ENCODE measurements at regions of chr6 and their contacts with region 1.

Region 1: DNA sequence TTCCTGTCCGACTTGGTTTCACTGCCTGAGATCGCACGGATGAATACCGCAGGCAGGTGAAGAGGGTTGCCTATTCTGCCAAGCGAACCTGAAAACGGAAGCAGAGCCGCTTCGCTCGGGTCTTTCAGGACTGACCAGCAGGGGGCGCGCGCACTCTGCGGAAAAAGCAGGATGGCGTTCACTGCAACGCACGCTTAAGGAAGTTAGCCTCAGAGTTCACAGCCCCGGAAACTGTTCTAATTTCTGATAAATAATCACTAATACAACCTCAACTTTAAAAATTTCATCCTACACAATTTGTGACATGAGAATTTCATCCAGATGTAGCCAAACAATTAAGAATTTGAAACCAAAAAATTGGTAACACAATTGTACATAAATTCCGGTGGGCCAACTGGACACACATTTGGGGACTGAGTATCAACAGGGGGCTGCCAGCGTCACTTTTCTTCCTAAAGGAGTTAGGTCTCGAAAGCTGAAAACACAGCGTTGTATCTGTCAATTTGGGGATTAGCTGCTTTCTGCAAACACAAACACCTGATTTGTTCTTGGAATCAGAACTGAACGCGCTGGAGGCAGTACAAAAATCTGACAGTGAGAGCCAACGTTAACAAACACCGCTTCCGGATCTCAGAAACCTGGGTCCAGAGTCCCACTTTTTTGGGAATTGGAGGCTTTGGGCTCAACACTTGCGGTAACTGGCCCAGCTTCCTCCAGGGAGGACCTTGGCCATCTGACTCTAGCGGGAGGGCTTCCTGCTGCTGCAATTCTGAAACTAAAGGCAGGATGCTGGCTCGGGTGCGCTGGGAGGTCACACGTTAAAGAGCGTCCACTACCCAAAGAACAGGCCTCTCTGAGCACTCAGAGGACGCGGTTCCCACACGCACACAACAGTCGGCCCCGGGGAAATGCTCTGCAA is 8.8 kb downstream of the PXDC1 start:
- DNase-seq: peak; percentile 90
- ATAC-seq: peak; percentile 92
- H3K4me3 Mint-ChIP-seq: no peak overlapping the region
- H3K27ac Mint-ChIP-seq: peak overlapping the region; percentile 20
- H3K4me1 Mint-ChIP-seq: peaks cover 7% of the 10 kb centered on the region
- H3K27me3 Mint-ChIP-seq: peaks cover 10% of the 10 kb centered on the region
- CTCF ChIP-seq: peak; percentile 94

Region 2: DNA sequence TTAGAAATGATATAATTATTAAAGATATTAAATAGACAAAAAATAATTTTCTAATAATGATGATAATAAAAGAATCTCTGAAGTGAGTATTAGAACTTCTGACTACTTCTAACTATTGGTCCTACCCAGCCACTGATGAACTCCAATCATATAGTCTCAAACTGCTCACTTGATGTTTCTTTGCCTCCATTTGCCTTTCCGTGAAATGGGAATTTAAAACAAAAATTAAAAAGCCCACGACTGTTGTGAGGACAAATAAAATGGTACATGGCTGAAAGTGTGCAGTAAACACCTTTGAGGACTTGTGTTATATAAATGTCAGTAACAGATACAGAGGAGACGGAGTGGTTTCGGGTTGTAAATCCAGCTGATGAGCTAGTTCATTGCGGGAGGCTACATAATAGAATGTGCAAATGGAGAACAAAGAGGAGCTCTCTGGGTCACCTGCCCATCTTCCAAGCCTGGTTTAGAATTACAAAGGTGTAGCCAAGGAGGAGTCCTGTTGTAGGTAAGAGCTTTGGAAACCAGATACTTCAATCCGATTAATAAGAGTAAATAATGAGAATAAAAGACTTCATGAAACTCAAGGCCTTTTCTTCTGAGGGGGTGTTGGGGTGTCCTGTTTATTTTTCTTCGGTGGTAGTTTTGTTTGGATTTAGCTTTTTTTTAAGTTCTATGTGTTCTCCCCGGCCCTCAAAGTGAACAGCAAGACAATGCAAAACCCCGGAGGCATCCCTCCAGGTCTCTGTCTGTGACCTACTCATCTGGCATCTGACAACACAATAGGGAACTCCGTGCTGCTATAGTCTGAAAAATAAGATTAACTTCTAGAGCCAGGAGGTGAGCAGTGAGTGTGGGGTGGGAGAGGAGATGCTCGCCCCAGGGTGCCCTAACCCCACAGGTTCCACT is 13.2 kb after region 1 on chr6:
- CTCF ChIA-PET with region 1: interaction called, 16 read pairs
- POLR2A ChIA-PET with region 1: interaction called, 4 read pairs
- intact Hi-C with region 1: no loop called
- DNase-seq: no peak
- ATAC-seq: no peak
- H3K4me3 Mint-ChIP-seq: no peak overlapping the region
- H3K27ac Mint-ChIP-seq: no peak overlapping the region
- H3K4me1 Mint-ChIP-seq: no peaks in the 10 kb centered on the region
- H3K27me3 Mint-ChIP-seq: peaks cover 18% of the 10 kb centered on the region
- CTCF ChIP-seq: no peak

Region 3: DNA sequence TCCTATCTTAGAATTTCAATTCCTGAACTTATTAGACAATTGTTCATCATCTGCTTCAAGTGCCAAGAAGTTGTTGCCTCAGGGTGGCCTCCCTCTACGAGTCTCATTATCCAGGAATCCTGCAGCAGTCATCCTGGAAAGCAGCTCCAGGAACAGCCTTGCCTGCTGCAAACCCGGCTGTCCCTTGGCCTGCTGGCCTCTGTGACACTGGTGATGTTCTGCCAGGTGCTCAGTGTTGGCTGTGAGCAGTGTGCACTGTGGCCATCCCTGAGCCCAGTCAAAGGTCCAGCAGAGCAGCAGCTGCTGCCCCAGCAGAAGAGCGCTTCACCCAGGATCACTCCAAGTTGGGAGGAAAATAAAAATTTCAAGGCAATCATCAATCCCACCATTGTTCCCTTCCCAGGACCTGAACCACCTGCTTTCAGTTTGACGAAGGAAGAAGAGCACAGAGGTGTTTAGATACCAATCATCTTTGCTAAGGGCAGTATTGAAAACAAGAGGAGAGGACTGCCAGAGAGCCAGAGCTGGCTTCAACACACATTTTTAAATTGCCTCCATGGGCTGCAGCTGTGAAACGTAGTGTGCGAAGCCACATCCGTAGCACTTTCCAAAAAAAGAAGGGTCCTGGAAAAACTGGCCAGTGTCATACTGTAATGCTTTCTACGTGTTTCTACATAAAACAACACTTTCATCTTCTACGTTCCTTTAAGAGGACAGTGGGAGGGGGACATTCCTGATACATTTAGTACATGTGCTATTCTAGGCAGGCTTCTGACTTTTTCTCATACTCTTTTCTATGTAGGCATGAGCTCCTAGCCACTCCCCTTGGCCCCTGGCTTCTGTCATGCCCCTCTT is 99.3 kb after region 1 on chr6:
- CTCF ChIA-PET with region 1: no interaction called
- POLR2A ChIA-PET with region 1: no interaction called
- intact Hi-C with region 1: no loop called
- DNase-seq: no peak
- ATAC-seq: no peak
- H3K4me3 Mint-ChIP-seq: no peak overlapping the region
- H3K27ac Mint-ChIP-seq: no peak overlapping the region
- H3K4me1 Mint-ChIP-seq: no peaks in the 10 kb centered on the region
- H3K27me3 Mint-ChIP-seq: no peaks in the 10 kb centered on the region
- CTCF ChIP-seq: no peak

Region 4: DNA sequence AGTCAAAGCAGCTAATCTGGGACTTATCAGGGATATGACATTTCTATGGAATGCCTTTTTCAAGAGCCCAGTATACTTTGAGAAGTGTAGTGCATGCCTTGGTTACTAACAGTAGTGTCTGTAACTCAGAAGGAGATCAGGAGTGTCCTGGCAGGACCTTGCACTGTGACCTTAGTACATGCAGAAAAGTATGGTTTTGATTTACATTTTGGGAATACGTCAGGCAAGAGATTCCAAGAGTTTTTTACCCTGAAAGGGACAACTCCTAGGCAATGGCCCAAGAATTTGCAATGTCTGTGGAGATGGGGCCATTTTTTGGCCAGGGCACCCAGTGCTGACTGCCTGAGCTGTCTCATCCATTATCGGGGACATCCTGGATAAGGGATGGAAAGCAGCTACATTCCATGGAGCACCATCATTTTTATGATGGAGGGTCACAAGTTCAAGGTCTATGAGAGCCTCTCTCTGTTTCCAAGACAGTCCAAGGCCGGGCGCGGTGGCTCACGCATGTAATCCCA is 186.7 kb after region 1 on chr6:
- CTCF ChIA-PET with region 1: interaction called, 62 read pairs
- POLR2A ChIA-PET with region 1: no interaction called
- intact Hi-C with region 1: loop called (anchors 2 kb)
- DNase-seq: no peak
- ATAC-seq: no peak
- H3K4me3 Mint-ChIP-seq: no peak overlapping the region
- H3K27ac Mint-ChIP-seq: no peak overlapping the region
- H3K4me1 Mint-ChIP-seq: no peaks in the 10 kb centered on the region
- H3K27me3 Mint-ChIP-seq: peaks cover 4% of the 10 kb centered on the region
- CTCF ChIP-seq: no peak

Region 5: GRCh38 chr6:3990692-3991501 is 248.2 kb after region 1 on chr6:
- CTCF ChIA-PET with region 1: interaction called, 16 read pairs
- POLR2A ChIA-PET with region 1: no interaction called
- intact Hi-C with region 1: loop called (anchors 5 kb)
- DNase-seq: peak; percentile 86
- ATAC-seq: peak; percentile 98
- H3K4me3 Mint-ChIP-seq: no peak overlapping the region
- H3K27ac Mint-ChIP-seq: no peak overlapping the region
- H3K4me1 Mint-ChIP-seq: peaks cover 8% of the 10 kb centered on the region
- H3K27me3 Mint-ChIP-seq: no peaks in the 10 kb centered on the region
- CTCF ChIP-seq: peak; percentile 75

Region 6: DNA sequence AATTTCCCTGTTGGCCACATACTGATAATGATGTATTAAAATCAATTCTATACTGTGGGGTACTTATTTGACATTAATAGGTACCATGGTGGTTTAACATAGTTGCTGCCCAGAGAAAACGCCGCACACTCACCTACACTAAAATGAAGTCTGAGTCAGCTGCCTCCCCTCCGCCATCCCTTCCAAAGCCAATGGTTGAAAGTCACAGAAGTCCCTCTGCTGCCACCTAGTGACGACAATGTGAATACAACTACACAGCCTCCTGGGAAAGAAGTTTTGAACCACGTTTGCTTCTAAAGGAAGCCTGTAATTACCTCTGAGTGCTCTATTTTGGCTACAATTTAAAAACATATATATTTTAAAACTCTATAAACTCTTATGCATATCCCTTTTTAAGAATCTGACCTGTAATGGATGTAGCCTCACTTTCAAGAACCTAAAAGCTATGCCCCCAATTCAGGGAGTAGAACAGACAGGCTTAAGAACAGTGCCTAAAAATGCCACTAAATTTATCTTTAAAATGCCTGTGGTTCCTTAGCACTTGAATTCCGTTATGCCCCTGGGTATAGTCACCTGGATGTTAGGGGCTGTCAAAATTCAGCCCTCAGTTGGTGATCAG is 413.3 kb after region 1 on chr6:
- CTCF ChIA-PET with region 1: interaction called, 5 read pairs
- POLR2A ChIA-PET with region 1: no interaction called
- intact Hi-C with region 1: loop called (anchors 5 kb)
- DNase-seq: peak; percentile 91
- ATAC-seq: peak; percentile 100
- H3K4me3 Mint-ChIP-seq: no peak overlapping the region
- H3K27ac Mint-ChIP-seq: no peak overlapping the region
- H3K4me1 Mint-ChIP-seq: peaks cover 6% of the 10 kb centered on the region
- H3K27me3 Mint-ChIP-seq: peaks cover 6% of the 10 kb centered on the region
- CTCF ChIP-seq: peak; percentile 80

Measured in activated CD8-positive, alpha-beta T cell treated with anti-CD3 and anti-CD28 coated beads for 36 hours (primary cell).